Naive thymus-derived CD4-positive, alpha-beta T cell (primary cell): ENCODE measurements at regions of chr11 and their contacts with region 1.

Region 1: DNA sequence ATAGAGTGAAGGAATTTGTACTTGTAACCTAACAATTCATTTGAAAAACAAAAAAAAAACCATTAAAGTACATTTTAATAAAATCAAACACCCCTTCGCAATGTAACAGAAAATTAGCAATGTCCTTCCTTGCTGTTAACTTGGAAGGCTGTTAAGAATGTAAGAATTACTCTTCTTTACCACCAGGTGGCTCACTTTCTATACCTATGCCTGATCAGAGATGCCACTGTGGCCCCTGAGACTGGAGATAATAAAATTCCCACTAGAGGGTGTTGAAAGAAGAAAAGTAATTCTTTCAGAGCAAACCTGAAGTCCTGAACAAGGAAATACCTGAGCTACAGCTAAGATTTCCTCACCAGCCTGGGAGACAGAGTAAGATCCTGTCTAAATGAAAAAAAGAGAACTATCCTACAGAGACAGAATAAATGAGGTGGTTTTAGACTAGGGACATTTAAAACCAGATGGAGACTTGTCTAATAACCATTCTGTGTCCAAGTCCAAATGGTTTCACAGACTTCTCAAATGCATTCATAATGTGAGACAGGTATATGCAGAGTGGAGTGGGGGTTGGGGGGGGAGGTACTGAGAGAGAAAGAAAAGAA is 1089.3 kb downstream of the FAM181B start:
- DNase-seq: peak in 7 of 9 donors; percentile 14 to 43 (median 34)
- ATAC-seq: peak; percentile 64
- H3K4me3 ChIP-seq: no peak overlapping the region
- H3K4me3 Mint-ChIP-seq: no peak overlapping the region
- H3K27ac ChIP-seq: no peak overlapping the region
- H3K27ac Mint-ChIP-seq: no peak overlapping the region
- H3K4me1 ChIP-seq: no peaks in the 10 kb centered on the region
- H3K4me1 Mint-ChIP-seq: peaks cover 0 to 3% (median 0%) of the 10 kb centered on the region in 7 donors
- H3K27me3 ChIP-seq: peaks cover 0 to 3% of the 10 kb centered on the region in 2 donors
- H3K27me3 Mint-ChIP-seq: peaks cover 13 to 39% (median 21%) of the 10 kb centered on the region in 5 donors

Region 2: DNA sequence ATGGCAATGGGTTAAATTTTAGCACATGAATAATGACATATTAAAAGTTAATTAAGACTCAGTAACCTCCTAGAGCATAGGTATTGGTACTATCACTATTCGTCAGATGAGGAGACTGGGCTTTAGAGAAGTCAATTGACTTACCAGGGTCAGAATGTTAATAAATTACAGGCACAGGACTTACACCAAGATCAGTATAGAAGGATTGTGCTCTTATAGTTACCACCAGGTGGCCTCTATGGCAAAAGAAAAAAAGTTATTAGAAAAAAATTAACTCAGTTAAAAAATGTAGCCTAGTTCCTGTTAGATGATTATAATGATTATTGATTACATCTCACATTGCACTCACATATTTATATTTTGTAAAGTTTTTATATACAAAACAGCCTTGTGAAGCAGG is 74.3 kb before region 1 on chr11:
- CTCF ChIA-PET with region 1: no interaction called
- POLR2A ChIA-PET with region 1: no interaction called
- intact Hi-C with region 1: no loop called
- DNase-seq: no peak
- ATAC-seq: no peak
- H3K4me3 ChIP-seq: no peak overlapping the region
- H3K4me3 Mint-ChIP-seq: no peak overlapping the region
- H3K27ac ChIP-seq: no peak overlapping the region
- H3K27ac Mint-ChIP-seq: no peak overlapping the region
- H3K4me1 ChIP-seq: no peaks in the 10 kb centered on the region
- H3K4me1 Mint-ChIP-seq: peaks cover 0 to 2% (median 0%) of the 10 kb centered on the region in 7 donors
- H3K27me3 ChIP-seq: no peaks in the 10 kb centered on the region
- H3K27me3 Mint-ChIP-seq: peaks cover 0 to 12% (median 0%) of the 10 kb centered on the region in 5 donors

Region 3: GRCh38 chr11:81602508-81602907 is 41.8 kb before region 1 on chr11:
- CTCF ChIA-PET with region 1: no interaction called
- POLR2A ChIA-PET with region 1: no interaction called
- intact Hi-C with region 1: no loop called
- DNase-seq: no peak
- ATAC-seq: no peak
- H3K4me3 ChIP-seq: no peak overlapping the region
- H3K4me3 Mint-ChIP-seq: no peak overlapping the region
- H3K27ac ChIP-seq: no peak overlapping the region
- H3K27ac Mint-ChIP-seq: no peak overlapping the region
- H3K4me1 ChIP-seq: no peaks in the 10 kb centered on the region
- H3K4me1 Mint-ChIP-seq: no peaks in the 10 kb centered on the region
- H3K27me3 ChIP-seq: no peaks in the 10 kb centered on the region
- H3K27me3 Mint-ChIP-seq: no peaks in the 10 kb centered on the region

Region 4: GRCh38 chr11:81963018-81963417 is 318.7 kb after region 1 on chr11:
- CTCF ChIA-PET with region 1: no interaction called
- POLR2A ChIA-PET with region 1: no interaction called
- intact Hi-C with region 1: loop called (anchors 1 to 5 kb)
- DNase-seq: peak in 3 of 9 donors; percentile 4 to 10 (median 5)
- ATAC-seq: no peak
- H3K4me3 ChIP-seq: no peak overlapping the region
- H3K4me3 Mint-ChIP-seq: peak overlapping the region in 6 of 10 donors; percentile 37 to 62 (median 45)
- H3K27ac ChIP-seq: no peak overlapping the region
- H3K27ac Mint-ChIP-seq: no peak overlapping the region
- H3K4me1 ChIP-seq: peaks cover 0 to 8% of the 10 kb centered on the region in 2 donors
- H3K4me1 Mint-ChIP-seq: peaks cover 0 to 22% (median 16%) of the 10 kb centered on the region in 7 donors
- H3K27me3 ChIP-seq: no peaks in the 10 kb centered on the region
- H3K27me3 Mint-ChIP-seq: peaks cover 0 to 3% (median 0%) of the 10 kb centered on the region in 5 donors

Region 5: DNA sequence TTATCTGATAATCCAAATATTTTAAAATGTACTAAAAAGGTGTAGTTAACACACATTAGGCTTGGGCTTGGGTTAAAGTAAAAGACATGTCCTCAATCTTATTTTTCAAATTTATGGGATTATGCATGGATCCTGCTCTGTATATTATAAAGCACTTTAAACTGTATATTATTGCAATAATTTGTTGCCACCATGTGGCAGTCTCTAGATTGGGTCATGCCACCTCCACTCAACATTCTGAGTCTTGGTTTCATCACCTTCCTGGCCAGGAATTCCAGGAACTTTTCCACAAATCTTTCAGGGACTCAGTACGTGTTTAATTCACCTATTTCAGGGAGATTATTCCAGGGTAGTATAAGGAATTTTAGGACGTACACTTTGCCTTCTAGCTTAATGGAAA is 393.8 kb after region 1 on chr11:
- CTCF ChIA-PET with region 1: interaction called, 3 read pairs
- POLR2A ChIA-PET with region 1: no interaction called
- intact Hi-C with region 1: loop called (anchors 1 kb)
- DNase-seq: no peak
- ATAC-seq: no peak
- H3K4me3 ChIP-seq: no peak overlapping the region
- H3K4me3 Mint-ChIP-seq: no peak overlapping the region
- H3K27ac ChIP-seq: no peak overlapping the region
- H3K27ac Mint-ChIP-seq: no peak overlapping the region
- H3K4me1 ChIP-seq: no peaks in the 10 kb centered on the region
- H3K4me1 Mint-ChIP-seq: no peaks in the 10 kb centered on the region
- H3K27me3 ChIP-seq: no peaks in the 10 kb centered on the region
- H3K27me3 Mint-ChIP-seq: no peaks in the 10 kb centered on the region

Region 6: GRCh38 chr11:82229341-82229740 is 585.0 kb after region 1 on chr11:
- CTCF ChIA-PET with region 1: interaction called, 5 read pairs
- POLR2A ChIA-PET with region 1: no interaction called
- intact Hi-C with region 1: loop called in 1 of 2 experiments (anchors 1 kb)
- DNase-seq: peak in 5 of 9 donors; percentile 0 to 21 (median 7)
- ATAC-seq: no peak
- H3K4me3 ChIP-seq: no peak overlapping the region
- H3K4me3 Mint-ChIP-seq: no peak overlapping the region
- H3K27ac ChIP-seq: no peak overlapping the region
- H3K27ac Mint-ChIP-seq: no peak overlapping the region
- H3K4me1 ChIP-seq: no peaks in the 10 kb centered on the region
- H3K4me1 Mint-ChIP-seq: no peaks in the 10 kb centered on the region
- H3K27me3 ChIP-seq: peaks cover 0 to 2% of the 10 kb centered on the region in 2 donors
- H3K27me3 Mint-ChIP-seq: peaks cover 0 to 4% (median 0%) of the 10 kb centered on the region in 5 donors

Region 7: GRCh38 chr11:82701847-82702520 is 1057.6 kb after region 1 on chr11:
- CTCF ChIA-PET with region 1: interaction called, 6 read pairs
- POLR2A ChIA-PET with region 1: no interaction called
- intact Hi-C with region 1: loop called (anchors 2 to 5 kb)
- DNase-seq: peak in 3 of 9 donors; percentile 4 to 8 (median 5)
- ATAC-seq: no peak
- H3K4me3 ChIP-seq: no peak overlapping the region
- H3K4me3 Mint-ChIP-seq: no peak overlapping the region
- H3K27ac ChIP-seq: no peak overlapping the region
- H3K27ac Mint-ChIP-seq: peak overlapping the region in 1 of 9 donors; percentile 4
- H3K4me1 ChIP-seq: no peaks in the 10 kb centered on the region
- H3K4me1 Mint-ChIP-seq: no peaks in the 10 kb centered on the region
- H3K27me3 ChIP-seq: no peaks in the 10 kb centered on the region
- H3K27me3 Mint-ChIP-seq: peaks cover 5 to 18% (median 11%) of the 10 kb centered on the region in 5 donors